Activated CD4-positive, alpha-beta T cell treated with anti-CD3 and anti-CD28 coated beads for 36 hours (primary cell): ENCODE measurements at regions of chr11 and their contacts with region 1.

Region 1: GRCh38 chr11:86261331-86261730 is 16.8 kb downstream of the EED start:
- DNase-seq: no peak
- ATAC-seq: peak; percentile 39
- H3K4me3 Mint-ChIP-seq: no peak overlapping the region
- H3K27ac Mint-ChIP-seq: no peak overlapping the region
- H3K4me1 Mint-ChIP-seq: peaks cover 47% of the 10 kb centered on the region
- H3K27me3 Mint-ChIP-seq: no peaks in the 10 kb centered on the region

Region 2: GRCh38 chr11:86279747-86280146 is 18.4 kb after region 1 on chr11:
- CTCF ChIA-PET with region 1: interaction called, 4 read pairs
- POLR2A ChIA-PET with region 1: interaction called, 9 read pairs
- intact Hi-C with region 1: loop called in 1 of 2 experiments (anchors 2 kb)
- DNase-seq: no peak
- ATAC-seq: no peak
- H3K4me3 Mint-ChIP-seq: no peak overlapping the region
- H3K27ac Mint-ChIP-seq: peak overlapping the region; percentile 8
- H3K4me1 Mint-ChIP-seq: peaks cover 55% of the 10 kb centered on the region
- H3K27me3 Mint-ChIP-seq: no peaks in the 10 kb centered on the region

Region 3: GRCh38 chr11:86644291-86644690 is 383.0 kb after region 1 on chr11:
- CTCF ChIA-PET with region 1: no interaction called
- POLR2A ChIA-PET with region 1: no interaction called
- intact Hi-C with region 1: no loop called
- DNase-seq: no peak
- ATAC-seq: no peak
- H3K4me3 Mint-ChIP-seq: no peak overlapping the region
- H3K27ac Mint-ChIP-seq: no peak overlapping the region
- H3K4me1 Mint-ChIP-seq: peaks cover 9% of the 10 kb centered on the region
- H3K27me3 Mint-ChIP-seq: peaks cover 3% of the 10 kb centered on the region